A549 (cell line): ENCODE measurements at regions of chr15 and their contacts with region 1.

Region 1: DNA sequence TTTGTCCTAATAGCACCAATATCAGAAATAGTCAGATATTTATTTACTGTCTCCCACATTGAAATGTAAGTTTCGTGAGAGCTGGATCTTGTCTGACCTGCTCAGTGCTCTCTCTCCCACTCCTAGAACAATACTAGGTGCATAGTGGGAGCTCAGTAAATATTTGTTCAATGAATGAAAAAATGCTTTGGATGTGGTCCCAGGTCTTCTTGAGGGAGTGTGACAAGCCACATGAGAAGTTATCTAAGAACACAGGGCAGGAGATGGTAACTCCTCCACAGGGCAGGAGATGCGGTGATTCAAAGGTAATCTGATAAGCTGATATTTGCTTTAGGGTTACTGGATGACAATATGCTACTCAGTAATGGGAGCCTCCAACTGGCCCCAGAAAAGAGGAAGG is 25.7 kb upstream of the PLA2G4E start:
- DNase-seq: peak; percentile 38 to 79
- ATAC-seq: peak; percentile 71 to 81
- H3K4me3 ChIP-seq: no peak overlapping the region
- H3K27ac ChIP-seq: peak overlapping the region; percentile 70 to 72
- H3K4me1 ChIP-seq: peaks cover 29% of the 10 kb centered on the region
- CTCF ChIP-seq: no peak
- EP300 ChIP-seq: peak in 1 of 2 experiments; percentile 44; a peak in 1 of 5 replicates
- POLR2A ChIP-seq: no peak
- RAD21 ChIP-seq: no peak

Region 2: DNA sequence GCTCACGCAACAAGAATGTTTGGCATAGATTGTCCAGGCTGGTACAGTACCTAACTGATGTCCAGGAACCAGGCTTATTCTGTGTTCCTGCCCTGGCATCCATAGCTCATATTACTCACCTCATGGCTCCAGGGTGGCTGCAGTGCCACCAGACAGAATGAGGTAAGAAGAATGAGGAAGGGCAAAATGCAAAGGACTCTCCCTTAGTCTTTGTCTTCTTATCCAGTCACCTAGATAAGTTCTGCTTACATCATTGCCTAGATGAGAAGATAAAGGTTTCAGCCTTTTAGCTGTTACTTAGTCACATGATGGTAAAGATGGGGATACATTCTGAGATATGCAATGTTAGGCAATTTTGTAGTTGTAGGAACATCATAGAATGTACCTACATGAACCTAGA is 769.8 kb before region 1 on chr15:
- CTCF ChIA-PET with region 1: no interaction called
- POLR2A ChIA-PET with region 1: no interaction called
- DNase-seq: peak in 1 of 2 experiments; percentile 42
- ATAC-seq: peak; percentile 57 to 62; a peak in 4 of 6 replicates
- H3K4me3 ChIP-seq: no peak overlapping the region
- H3K27ac ChIP-seq: peak overlapping the region; percentile 38 to 57; a peak in 4 of 6 replicates
- H3K4me1 ChIP-seq: peaks cover 24% of the 10 kb centered on the region
- CTCF ChIP-seq: no peak
- EP300 ChIP-seq: no peak
- POLR2A ChIP-seq: no peak
- RAD21 ChIP-seq: no peak

Region 3: GRCh38 chr15:42018306-42019224 is 28.0 kb before region 1 on chr15:
- CTCF ChIA-PET with region 1: no interaction called
- POLR2A ChIA-PET with region 1: no interaction called
- DNase-seq: no peak
- ATAC-seq: no peak
- H3K4me3 ChIP-seq: no peak overlapping the region
- H3K27ac ChIP-seq: no peak overlapping the region
- H3K4me1 ChIP-seq: no peaks in the 10 kb centered on the region
- CTCF ChIP-seq: no peak
- EP300 ChIP-seq: no peak
- POLR2A ChIP-seq: no peak
- RAD21 ChIP-seq: no peak

Region 4: DNA sequence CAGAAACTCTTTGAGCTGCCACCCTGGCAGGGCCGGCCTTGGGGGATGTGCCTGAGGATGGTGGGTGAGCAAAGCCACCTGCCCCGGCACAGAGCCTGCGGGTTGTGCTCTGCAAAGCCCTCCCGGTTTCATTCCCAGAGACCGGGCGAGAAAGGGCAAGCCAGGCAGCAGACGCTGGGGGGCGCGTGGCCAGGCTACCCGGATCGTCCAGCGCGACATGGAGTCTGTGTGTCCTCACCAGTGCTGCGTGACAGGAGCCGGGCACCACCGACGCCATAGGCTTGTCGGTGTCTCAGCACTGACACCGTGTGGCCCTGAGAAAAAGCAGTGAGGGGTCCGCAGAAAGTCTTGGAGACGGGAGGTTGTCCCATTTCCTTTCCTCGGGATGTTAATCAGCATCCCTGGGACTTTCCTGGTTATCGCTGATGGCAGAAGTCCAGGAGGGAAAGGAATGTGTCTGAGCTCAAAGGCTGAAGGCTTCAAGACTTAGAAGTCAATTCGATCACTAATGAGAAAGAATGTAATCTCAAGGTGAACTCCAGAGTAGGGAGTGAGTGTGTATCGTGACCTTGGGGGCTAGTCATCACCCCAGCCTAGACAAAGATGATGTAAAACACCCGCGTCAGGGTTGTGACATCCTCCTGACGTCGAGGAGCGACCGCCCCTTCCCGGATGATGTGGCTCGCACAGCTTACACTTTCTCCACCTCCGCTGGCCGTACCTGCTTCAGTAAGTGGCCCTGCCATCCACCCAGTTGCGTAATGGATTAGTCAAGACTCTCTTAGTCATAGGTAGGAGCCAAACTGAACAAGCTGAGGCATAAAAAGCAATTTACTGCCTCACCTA is 10.6 kb after region 1 on chr15:
- CTCF ChIA-PET with region 1: interaction called, 15 read pairs
- POLR2A ChIA-PET with region 1: no interaction called
- DNase-seq: peak; percentile 88 to 94
- ATAC-seq: peak; percentile 94 to 96
- H3K4me3 ChIP-seq: peak overlapping the region; percentile 39
- H3K27ac ChIP-seq: peak overlapping the region; percentile 70 to 85
- H3K4me1 ChIP-seq: peaks cover 10% of the 10 kb centered on the region; the same call in 2 of the 3 replicates
- CTCF ChIP-seq: peak; percentile 60
- EP300 ChIP-seq: peak; percentile 20 to 44; a peak in 2 of 5 replicates
- POLR2A ChIP-seq: no peak
- RAD21 ChIP-seq: peak; percentile 54 to 69